Activated naive CD8-positive, alpha-beta T cell treated with anti-CD3 and anti-CD28 coated beads, Interleukin-2, amount 10 ng/mL, durations not matched to agents 7 days and 5 days (primary cell): ENCODE measurements at regions of chr12 and their contacts with region 1.

Region 1: DNA sequence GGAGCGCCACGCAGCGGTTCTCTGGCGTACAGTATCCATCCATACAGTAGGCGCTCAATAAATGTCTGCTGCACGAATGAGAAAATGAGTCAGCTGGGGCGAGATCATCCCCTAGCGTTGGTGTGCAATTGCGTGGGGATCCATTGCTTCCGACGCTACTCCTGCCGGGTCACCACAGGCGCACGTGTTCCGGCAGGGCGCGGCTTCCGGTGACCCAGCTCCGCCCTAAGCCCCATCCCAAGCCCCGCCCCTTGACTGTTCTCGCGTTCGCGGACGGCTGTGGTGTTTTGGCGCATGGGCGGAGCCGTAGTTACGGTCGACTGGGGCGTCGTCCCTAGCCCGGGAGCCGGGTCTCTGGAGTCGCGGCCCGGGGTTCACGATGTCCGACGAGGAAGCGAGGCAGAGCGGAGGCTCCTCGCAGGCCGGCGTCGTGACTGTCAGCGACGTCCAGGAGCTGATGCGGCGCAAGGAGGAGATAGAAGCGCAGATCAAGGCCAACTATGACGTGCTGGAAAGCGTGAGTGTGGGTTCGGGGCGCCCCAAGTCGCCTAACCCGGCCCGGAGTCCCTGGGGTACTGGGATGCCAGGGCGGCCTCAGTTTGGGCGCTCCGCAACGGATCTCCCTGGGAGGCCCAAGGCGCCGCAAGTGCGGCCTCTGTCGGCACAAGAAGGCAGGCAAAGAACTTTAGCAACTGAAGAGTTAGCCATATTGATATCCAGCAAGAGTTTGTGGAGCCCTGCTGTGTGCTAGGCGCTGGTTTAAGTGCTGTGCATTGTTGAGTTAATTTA is at the start of gene PSMD9:
- DNase-seq: peak; percentile 99
- ATAC-seq: peak; percentile 88
- H3K4me3 Mint-ChIP-seq: peak within 1 kb of the TSS; percentile 100
- H3K27ac Mint-ChIP-seq: peak within 1 kb of the TSS; percentile 100
- H3K4me1 Mint-ChIP-seq: peaks cover 30% of the 10 kb centered on the region
- H3K27me3 Mint-ChIP-seq: peaks cover 6% of the 10 kb centered on the region
- total RNA-seq, gene PSMD9: 50.8 to 57.9 TPM

Region 2: GRCh38 chr12:121793838-121794533 is 94.7 kb before region 1 on chr12:
- POLR2A ChIA-PET with region 1: interaction called, 12 read pairs
- DNase-seq: peak; percentile 99
- ATAC-seq: peak; percentile 59
- H3K4me3 Mint-ChIP-seq: peak overlapping the region; percentile 72
- H3K27ac Mint-ChIP-seq: peak overlapping the region; percentile 92
- H3K4me1 Mint-ChIP-seq: peaks cover 46% of the 10 kb centered on the region
- H3K27me3 Mint-ChIP-seq: no peaks in the 10 kb centered on the region

Region 3: DNA sequence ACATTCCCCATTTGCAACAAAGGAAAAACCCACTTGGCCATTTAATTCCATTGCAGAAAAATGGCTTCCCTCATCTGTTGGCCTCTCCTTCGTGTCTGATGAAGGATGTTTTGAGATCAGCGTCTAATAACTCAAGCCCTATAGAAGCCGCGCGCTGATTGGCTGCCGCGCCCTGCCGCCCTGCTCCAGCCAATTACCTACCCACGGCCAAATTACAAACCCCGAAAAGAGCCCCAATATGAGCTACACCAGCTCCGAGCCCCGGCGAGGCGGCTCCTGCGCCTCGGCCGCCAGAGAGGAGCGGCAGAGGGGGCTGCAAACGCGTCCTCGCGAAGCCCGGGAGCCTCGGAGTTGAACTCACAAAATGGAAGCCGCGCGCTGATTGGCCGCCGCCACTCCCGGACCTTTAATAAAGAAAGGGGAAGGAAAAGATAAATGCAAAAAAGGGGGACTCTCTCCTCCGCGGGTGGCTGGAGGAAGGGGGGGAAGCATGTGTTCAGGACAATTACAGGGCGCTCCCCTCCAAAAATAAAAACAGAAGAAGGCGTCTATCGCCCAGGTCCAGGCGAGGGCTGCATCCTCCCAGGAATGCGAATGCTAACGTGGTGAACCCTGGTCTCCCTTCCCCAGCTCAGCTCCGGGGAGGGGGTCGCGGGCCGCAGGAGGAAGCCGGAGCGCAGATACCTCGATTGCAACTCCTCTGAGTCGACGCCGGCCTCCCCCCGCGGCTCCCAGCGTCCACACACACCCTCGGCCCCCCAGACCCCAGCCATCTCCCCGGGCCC is 85.6 kb before region 1 on chr12:
- POLR2A ChIA-PET with region 1: interaction called, 12 read pairs
- DNase-seq: peak; percentile 90
- ATAC-seq: peak; percentile 67
- H3K4me3 Mint-ChIP-seq: peak overlapping the region; percentile 89
- H3K27ac Mint-ChIP-seq: peak overlapping the region; percentile 98
- H3K4me1 Mint-ChIP-seq: peaks cover 29% of the 10 kb centered on the region
- H3K27me3 Mint-ChIP-seq: no peaks in the 10 kb centered on the region

Region 4: DNA sequence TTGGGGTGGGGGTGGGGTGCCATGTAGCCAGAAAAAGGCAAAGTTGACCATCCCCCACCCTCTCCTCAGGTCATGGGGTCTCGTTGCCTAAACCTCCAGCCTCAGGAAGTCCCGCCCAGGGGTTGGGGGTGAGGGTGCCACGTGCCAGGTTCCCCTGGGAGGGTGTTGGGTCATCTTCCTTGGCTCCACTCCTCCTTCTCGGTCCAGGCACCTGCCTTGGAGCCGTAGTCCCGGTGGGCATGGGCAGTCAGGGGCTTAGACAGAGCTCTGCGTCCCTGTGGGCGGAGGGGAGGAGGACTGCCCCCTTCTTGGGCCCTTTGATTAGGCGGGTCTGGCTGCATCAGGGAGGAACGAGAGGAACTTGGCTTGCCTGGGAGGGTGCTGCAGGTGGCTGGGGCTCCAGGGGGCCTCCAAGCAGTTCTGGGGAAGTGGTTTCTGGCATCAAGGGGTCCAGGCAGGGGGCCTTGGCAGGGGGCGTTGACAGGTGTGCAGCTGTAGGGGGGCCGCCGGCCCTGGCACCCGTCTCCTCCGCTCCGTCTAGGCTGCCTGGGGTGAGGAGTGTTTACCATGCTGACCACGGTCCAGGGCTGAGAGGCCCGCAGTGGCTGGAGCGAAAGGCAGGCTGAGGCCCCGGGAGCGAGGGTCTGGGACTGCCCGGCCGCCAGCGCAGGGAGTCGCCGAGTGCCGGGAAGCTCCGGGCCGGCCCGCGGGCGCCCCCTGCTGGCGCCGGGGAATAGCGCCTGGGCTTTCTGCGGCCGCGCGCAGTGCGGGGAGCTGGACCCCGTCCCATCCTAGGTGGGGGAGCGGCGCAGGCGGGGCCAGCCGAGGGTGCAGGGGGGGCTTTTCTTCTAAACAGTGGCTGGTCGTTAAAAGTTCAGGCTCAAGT is 77.0 kb before region 1 on chr12:
- POLR2A ChIA-PET with region 1: interaction called, 16 read pairs
- DNase-seq: peak; percentile 90
- ATAC-seq: peak; percentile 80
- H3K4me3 Mint-ChIP-seq: peak overlapping the region; percentile 82
- H3K27ac Mint-ChIP-seq: peak overlapping the region; percentile 80
- H3K4me1 Mint-ChIP-seq: peaks cover 31% of the 10 kb centered on the region
- H3K27me3 Mint-ChIP-seq: no peaks in the 10 kb centered on the region